ENCODE measurements at regions of chr11 and their contacts with region 1.

Region 1: DNA sequence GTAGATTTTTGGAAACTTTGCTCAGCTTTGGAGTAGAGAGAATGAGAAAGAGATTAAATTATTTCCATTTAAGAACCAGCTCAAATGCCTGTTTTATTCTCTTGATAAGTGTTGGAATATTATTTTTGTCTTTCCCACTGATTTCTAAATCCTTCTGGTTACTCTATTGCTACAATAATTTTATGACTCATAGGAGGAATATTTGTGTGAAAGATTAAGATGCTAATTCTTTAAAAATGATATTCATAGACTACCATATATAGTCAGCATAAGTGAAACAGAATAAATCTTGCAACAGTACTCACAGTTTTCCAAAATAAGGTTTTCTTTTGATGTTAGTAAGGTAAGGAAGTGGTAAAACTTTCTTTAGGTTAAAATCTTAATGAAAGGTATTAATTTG is 60.9 kb downstream of the YAP1 start:
- DNase-seq: no peak
- ATAC-seq: no peak
- H3K4me3 ChIP-seq: no peak overlapping the region
- H3K27ac ChIP-seq: no peak overlapping the region
- H3K4me1 ChIP-seq: peaks cover 17 to 53% of the 10 kb centered on the region in 2 experiments
- H3K27me3 ChIP-seq: no peaks in the 10 kb centered on the region
- CTCF ChIP-seq: no peak
- POLR2A ChIP-seq: no peak
- RAD21 ChIP-seq: 0 out of 2 replicates have a peak, but pooled peaks have one; percentile 1

Region 2: DNA sequence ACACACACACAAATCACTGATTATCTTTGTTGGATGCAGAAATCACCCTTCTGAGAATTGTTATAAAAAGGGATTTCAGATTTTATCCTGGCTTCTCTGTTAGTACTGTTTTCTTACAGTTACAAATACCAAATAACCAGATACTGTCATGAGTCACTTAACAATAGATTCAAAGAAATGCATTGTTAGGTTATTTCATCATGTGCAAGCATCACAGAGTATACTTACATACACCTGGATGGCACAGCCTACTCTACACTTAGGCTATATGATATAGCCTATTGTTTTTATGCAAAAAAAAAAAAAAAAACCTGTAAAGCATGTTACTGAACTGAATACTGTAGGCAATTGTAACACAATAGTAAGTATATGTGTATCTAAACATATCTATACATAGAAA is 1803.2 kb before region 1 on chr11:
- CTCF ChIA-PET with region 1: no interaction called
- POLR2A ChIA-PET with region 1: no interaction called
- RAD21 ChIA-PET with region 1: no interaction called
- intact Hi-C with region 1: no loop called
- DNase-seq: no peak
- ATAC-seq: no peak
- H3K4me3 ChIP-seq: no peak overlapping the region
- H3K27ac ChIP-seq: no peak overlapping the region
- H3K4me1 ChIP-seq: no peaks in the 10 kb centered on the region
- H3K27me3 ChIP-seq: no peaks in the 10 kb centered on the region
- CTCF ChIP-seq: no peak
- POLR2A ChIP-seq: no peak
- RAD21 ChIP-seq: no peak

Region 3: GRCh38 chr11:102109896-102110760 is 61.0 kb before region 1 on chr11 and contains the start of gene YAP1:
- CTCF ChIA-PET with region 1: no interaction called
- POLR2A ChIA-PET with region 1: no interaction called
- RAD21 ChIA-PET with region 1: no interaction called
- intact Hi-C with region 1: loop called (anchors 5 kb)
- DNase-seq: peak; percentile 77
- ATAC-seq: peak; percentile 56
- H3K4me3 ChIP-seq: peak within 1 kb of the TSS; percentile 82 to 83
- H3K27ac ChIP-seq: peak within 1 kb of the TSS; percentile 100
- H3K4me1 ChIP-seq: peaks cover 33 to 52% of the 10 kb centered on the region in 2 experiments
- H3K27me3 ChIP-seq: no peaks in the 10 kb centered on the region
- CTCF ChIP-seq: no peak
- POLR2A ChIP-seq: peak; percentile 37
- RAD21 ChIP-seq: 0 out of 2 replicates have a peak, but pooled peaks have one; percentile 42
- total RNA-seq, gene YAP1: 88.6 TPM

Measured in HCT116 (cell line).